Activated T-helper 1 cell treated with anti-CD3 and anti-CD28 coated beads, Interleukin-12 subunit alpha, Interleukin-12 subunit beta, Interleukin-2, Interleukin-4 antibody, amounts not matched to agents 30 ng/mL and 10 ng/mL and 1 ng/mL, durations not matched to agents 14 hours and 24 hours and 36 hours (primary cell): ENCODE measurements at regions of chr18 and their contacts with region 1.

Region 1: GRCh38 chr18:57446322-57446721 is 11.1 kb downstream of the ONECUT2 start:
- DNase-seq: no peak
- H3K4me3 Mint-ChIP-seq: no peak overlapping the region
- H3K27ac Mint-ChIP-seq: no peak overlapping the region
- H3K4me1 Mint-ChIP-seq: no peaks in the 10 kb centered on the region
- H3K27me3 Mint-ChIP-seq: peaks cover 25% of the 10 kb centered on the region

Region 2: DNA sequence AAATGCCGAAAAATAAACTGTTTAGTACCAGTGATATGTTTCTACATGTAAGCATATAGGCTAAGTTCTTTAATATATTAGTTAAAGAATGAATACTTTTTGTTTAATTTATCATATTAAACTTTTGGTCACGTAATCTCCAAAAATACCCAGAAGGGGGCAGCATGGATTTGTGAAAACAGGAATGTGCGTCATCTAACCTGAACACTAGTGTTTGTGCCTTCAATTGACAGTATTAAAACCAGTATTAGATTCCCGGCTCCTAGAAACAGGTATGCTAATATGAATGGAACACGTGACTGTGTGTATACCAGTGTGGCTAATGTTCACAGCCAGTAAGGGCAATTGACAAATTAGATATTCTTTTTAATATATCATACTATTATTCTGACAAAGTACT is 743.4 kb before region 1 on chr18:
- intact Hi-C with region 1: loop called (anchors 5 kb)
- DNase-seq: no peak
- H3K4me3 Mint-ChIP-seq: no peak overlapping the region
- H3K27ac Mint-ChIP-seq: no peak overlapping the region
- H3K4me1 Mint-ChIP-seq: peaks cover 5% of the 10 kb centered on the region
- H3K27me3 Mint-ChIP-seq: no peaks in the 10 kb centered on the region

Region 3: DNA sequence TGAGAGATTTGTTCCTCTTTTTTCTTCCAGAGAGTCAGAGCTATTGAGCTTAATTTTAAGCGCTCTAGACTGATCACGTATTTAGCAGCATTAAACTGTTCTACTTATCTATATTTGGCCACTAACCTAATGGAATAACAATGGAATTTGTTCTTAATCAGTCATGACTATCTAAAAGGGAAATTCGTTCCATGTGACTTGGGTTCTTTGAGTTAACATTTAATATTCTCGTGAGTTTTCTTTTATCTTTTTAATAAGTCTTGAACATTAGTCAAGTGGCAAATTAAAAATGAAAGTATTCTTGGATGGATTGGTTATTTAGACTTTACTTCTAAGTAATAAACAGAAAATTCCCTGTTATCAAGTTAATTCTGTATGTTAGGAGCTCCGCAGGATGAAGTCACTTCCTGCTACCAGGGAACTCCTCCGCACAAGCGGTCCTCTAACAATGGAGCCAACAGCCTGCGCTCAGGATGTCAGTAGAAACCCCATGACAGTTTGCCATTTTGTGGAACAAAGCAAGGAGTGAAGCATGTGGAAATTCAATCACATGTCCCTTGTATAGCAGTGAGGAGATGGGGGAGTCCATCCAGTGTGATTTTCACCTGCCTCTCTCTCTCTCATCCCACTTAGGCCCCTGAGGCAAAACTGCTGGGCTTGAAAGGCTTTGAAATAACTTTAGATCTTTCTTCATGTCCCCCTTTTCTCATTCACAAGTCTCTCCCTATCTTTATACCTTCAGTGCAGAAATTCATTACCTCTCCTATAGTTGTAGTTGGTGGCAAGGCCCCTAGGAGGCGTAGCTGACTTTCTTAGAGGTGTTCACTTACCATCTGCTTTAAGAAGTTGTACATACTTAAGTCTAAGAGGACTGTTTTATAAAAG is 657.1 kb before region 1 on chr18:
- intact Hi-C with region 1: loop called (anchors 5 kb)
- DNase-seq: no peak
- H3K4me3 Mint-ChIP-seq: no peak overlapping the region
- H3K27ac Mint-ChIP-seq: no peak overlapping the region
- H3K4me1 Mint-ChIP-seq: no peaks in the 10 kb centered on the region
- H3K27me3 Mint-ChIP-seq: no peaks in the 10 kb centered on the region